ENCODE measurements at regions of chr2 and their contacts with region 1.

Region 1: GRCh38 chr2:199206536-199206935 is 251.2 kb downstream of the SATB2 start:
- DNase-seq: no peak
- ATAC-seq: peak; percentile 36; the same call in 2 of the 3 replicates
- H3K4me3 ChIP-seq: no peak overlapping the region
- H3K27ac ChIP-seq: no peak overlapping the region
- H3K4me1 ChIP-seq: no peaks in the 10 kb centered on the region
- H3K27me3 ChIP-seq: no peaks in the 10 kb centered on the region
- CTCF ChIP-seq: no peak
- EP300 ChIP-seq: no peak
- POLR2A ChIP-seq: no peak
- RAD21 ChIP-seq: no peak

Region 2: GRCh38 chr2:199160677-199161465 is 45.7 kb before region 1 on chr2:
- CTCF ChIA-PET with region 1: no interaction called
- POLR2A ChIA-PET with region 1: no interaction called
- RAD21 ChIA-PET with region 1: no interaction called
- SMC1A ChIA-PET with region 1: no interaction called
- in situ Hi-C with region 1: no loop called
- intact Hi-C with region 1: no loop called
- DNase-seq: no peak
- ATAC-seq: no peak
- H3K4me3 ChIP-seq: no peak overlapping the region
- H3K27ac ChIP-seq: no peak overlapping the region
- H3K4me1 ChIP-seq: no peaks in the 10 kb centered on the region
- H3K27me3 ChIP-seq: no peaks in the 10 kb centered on the region
- CTCF ChIP-seq: no peak
- EP300 ChIP-seq: no peak
- POLR2A ChIP-seq: no peak
- RAD21 ChIP-seq: no peak

Region 3: DNA sequence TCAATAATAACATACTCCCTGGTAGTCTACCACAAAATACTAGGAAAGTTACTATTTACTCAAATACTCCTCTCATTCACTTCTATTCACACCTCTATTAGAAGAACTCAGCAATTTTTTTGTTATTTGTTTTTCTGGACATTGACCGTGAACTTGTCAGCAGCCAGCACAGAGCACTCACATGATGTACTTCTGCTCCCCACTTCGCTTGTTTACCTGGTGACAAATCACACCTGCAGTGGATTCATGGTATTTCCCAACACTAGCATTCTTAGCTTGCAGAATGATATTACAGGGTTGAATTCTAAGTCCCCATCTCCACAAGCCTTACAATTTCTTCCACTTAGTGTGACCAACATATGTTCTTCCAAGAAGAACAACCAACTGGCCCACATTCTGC is 13.0 kb after region 1 on chr2:
- CTCF ChIA-PET with region 1: interaction called, 3 read pairs
- POLR2A ChIA-PET with region 1: interaction called, 3 read pairs
- RAD21 ChIA-PET with region 1: no interaction called
- SMC1A ChIA-PET with region 1: interaction called, 10 read pairs
- in situ Hi-C with region 1: no loop called
- intact Hi-C with region 1: no loop called
- DNase-seq: no peak
- ATAC-seq: no peak
- H3K4me3 ChIP-seq: no peak overlapping the region
- H3K27ac ChIP-seq: no peak overlapping the region
- H3K4me1 ChIP-seq: no peaks in the 10 kb centered on the region
- H3K27me3 ChIP-seq: no peaks in the 10 kb centered on the region
- CTCF ChIP-seq: no peak
- EP300 ChIP-seq: no peak
- POLR2A ChIP-seq: no peak
- RAD21 ChIP-seq: no peak